Calu3 (cell line): ENCODE measurements at regions of chr22 and their contacts with region 1.

Region 1: GRCh38 chr22:19962233-19962908 is 20.8 kb upstream of the TXNRD2 start:
- DNase-seq: peak; percentile 81
- H3K4me3 Mint-ChIP-seq: peak overlapping the region; percentile 78
- H3K27ac Mint-ChIP-seq: peak overlapping the region; percentile 96
- H3K4me1 Mint-ChIP-seq: peaks cover 61% of the 10 kb centered on the region
- H3K27me3 Mint-ChIP-seq: no peaks in the 10 kb centered on the region
- CTCF ChIP-seq: peak; percentile 92

Region 2: GRCh38 chr22:19109198-19110067 is 852.9 kb before region 1 on chr22:
- CTCF ChIA-PET with region 1: no interaction called
- intact Hi-C with region 1: no loop called
- DNase-seq: no peak
- H3K4me3 Mint-ChIP-seq: no peak overlapping the region
- H3K27ac Mint-ChIP-seq: peak overlapping the region; percentile 21
- H3K4me1 Mint-ChIP-seq: peaks cover 35% of the 10 kb centered on the region
- H3K27me3 Mint-ChIP-seq: no peaks in the 10 kb centered on the region
- CTCF ChIP-seq: no peak

Region 3: DNA sequence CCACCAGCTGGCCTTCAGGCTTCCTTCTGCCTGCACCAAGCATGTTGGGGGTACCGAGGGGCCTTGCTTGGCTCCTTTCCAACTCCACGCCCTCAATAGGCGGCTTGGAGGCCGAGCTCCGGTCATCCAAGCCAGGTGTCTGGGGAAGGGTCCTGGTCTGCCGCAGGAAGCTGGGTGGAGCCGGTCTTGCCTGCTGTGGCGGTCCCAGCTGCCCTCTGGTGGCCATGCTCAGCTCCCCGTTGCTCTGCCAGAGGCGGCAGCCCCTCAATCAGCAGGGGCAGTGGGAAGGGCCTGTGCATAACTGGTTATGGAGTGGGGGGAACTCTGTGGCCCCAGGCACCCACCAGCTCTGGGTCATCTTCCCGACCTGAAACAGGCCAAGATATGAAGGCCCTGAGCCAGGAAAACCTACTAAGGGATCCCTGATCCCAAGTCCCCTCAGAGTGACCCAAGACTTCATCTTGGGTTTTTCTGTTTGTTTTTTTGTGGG is 51.1 kb after region 1 on chr22:
- CTCF ChIA-PET with region 1: interaction called, 11 read pairs
- intact Hi-C with region 1: no loop called
- DNase-seq: peak; percentile 73
- H3K4me3 Mint-ChIP-seq: no peak overlapping the region
- H3K27ac Mint-ChIP-seq: no peak overlapping the region
- H3K4me1 Mint-ChIP-seq: peaks cover 7% of the 10 kb centered on the region
- H3K27me3 Mint-ChIP-seq: no peaks in the 10 kb centered on the region
- CTCF ChIP-seq: peak; percentile 67